ENCODE measurements at regions of chr9 and their contacts with region 1.

Region 1: GRCh38 chr9:8907863-8908262 is 1108.3 kb upstream of the DMAC1 start:
- DNase-seq: no peak
- ATAC-seq: no peak

Region 2: GRCh38 chr9:7828334-7828733 is 1079.5 kb before region 1 on chr9:
- intact Hi-C with region 1: loop called (anchors 10 kb)
- DNase-seq: no peak
- ATAC-seq: peak; percentile 42

Region 3: GRCh38 chr9:8168916-8169438 is 738.9 kb before region 1 on chr9:
- intact Hi-C with region 1: loop called (anchors 5 kb)
- DNase-seq: no peak
- ATAC-seq: peak; percentile 48

Region 4: DNA sequence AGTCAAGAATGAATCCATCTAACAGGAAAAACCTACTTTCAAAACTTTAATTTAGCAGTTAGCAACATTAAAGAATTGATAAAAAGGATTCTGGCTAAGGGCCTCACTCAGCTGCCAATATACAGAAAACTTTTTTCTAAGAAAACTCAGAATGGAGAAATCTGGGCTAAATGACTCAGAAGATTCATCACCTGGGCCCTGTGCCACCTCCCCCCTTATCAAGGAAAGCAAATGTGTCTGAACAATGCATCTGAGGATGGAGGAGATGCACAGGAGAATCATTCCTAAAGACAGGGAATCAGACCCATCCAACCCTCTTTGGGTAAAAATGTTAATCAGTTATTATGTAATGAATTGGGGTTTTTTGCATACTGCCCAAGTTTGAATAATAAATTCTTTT is 516.3 kb before region 1 on chr9:
- intact Hi-C with region 1: no loop called
- DNase-seq: no peak
- ATAC-seq: no peak

Region 5: DNA sequence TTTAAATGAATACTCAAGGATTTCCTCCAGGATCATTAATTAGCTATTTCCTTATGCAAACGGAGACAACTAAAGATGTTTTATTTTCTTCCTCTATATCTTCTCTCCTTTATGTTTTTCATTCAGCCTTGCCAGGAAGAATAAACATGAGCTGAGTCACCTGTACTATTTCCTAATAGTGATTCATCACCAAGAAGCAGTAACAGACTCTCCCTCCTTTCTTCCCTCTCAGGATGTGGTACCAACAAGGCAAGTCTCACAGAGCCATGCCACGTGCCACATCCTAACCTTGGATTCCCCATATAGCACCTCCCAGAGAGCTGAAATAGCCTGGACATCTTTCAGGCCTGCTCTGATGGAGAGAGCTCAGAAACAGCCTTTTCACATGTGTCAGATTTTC is 349.7 kb before region 1 on chr9:
- intact Hi-C with region 1: no loop called
- DNase-seq: no peak
- ATAC-seq: no peak

Region 6: DNA sequence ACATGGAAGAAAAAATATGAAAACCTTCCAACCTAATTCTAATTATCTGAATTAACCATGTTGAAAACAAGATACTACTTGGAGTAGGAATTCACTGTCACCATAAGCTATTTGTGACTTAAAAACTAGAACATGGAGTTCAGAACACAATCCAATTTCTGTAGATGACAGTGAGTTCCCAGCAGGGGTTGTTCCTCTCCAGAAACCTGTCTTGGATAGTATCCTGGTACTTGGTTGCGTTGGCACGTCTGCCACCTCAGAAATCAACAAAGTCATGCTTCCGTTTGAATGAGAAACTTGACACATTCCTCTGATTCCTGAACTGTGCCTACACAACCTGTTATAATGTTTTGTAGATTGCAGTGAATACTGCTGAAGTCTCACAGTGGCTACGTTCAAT is 318.4 kb before region 1 on chr9:
- intact Hi-C with region 1: no loop called
- DNase-seq: no peak
- ATAC-seq: no peak